ENCODE measurements at regions of chr4 and their contacts with region 1.

Region 1: DNA sequence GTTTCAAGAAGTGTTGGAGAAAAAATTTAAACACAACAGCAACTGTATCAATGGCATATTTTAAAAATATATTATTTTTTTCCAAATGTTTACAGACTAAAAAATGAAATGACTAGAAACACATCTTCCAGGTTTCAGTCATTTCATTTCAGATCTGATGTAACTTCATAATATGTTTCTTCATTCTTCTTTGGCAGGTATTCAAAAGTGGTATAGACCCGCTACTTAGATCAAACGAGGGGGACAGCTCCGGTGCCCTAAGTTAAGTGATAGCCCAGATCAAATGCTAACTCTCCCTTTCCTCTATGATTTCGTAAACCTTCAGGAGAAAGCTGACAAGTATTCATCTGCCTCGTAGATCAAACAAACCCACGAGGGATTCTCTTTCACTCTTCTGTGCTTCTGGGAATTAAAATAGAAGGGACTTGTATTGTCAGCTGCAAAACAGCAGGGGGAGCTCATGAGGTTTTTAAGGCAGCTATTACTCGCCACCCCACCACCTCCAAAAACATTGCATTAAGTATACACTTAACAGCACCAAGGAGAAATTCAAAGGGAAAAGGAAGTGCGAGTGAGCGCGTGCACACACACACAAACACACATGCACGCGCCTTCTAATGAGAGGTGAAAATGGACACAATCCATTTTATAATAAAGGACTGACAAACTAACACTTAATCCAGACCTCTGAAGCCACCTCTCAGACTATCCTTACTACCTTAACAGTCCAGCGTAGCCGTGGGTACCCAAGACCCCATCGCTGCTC is 21.4 kb downstream of the HELT start:
- DNase-seq: peak in 1 of 2 experiments; percentile 70
- H3K4me3 ChIP-seq: no peak overlapping the region
- H3K27ac ChIP-seq: no peak overlapping the region
- H3K4me1 ChIP-seq: no peaks in the 10 kb centered on the region; a peak in 1 of 7 replicates
- H3K27me3 ChIP-seq: peaks cover 0 to 2% (median 0%) of the 10 kb centered on the region in 4 experiments; a peak in 2 of 7 replicates
- CTCF ChIP-seq: peak in 2 of 3 experiments; percentile 72 to 83; a peak in 3 of 4 replicates
- EP300 ChIP-seq: no peak
- POLR2A ChIP-seq: no peak
- RAD21 ChIP-seq: peak; percentile 85

Region 2: GRCh38 chr4:185020293-185020808 is 19.3 kb before region 1 on chr4:
- CTCF ChIA-PET with region 1: interaction called, 68 read pairs
- POLR2A ChIA-PET with region 1: no interaction called
- DNase-seq: peak in 1 of 2 experiments; percentile 83
- H3K4me3 ChIP-seq: peak overlapping the region; percentile 2 to 53 (median 28); a peak in 7 of 8 replicates
- H3K27ac ChIP-seq: no peak overlapping the region
- H3K4me1 ChIP-seq: peaks cover 0 to 52% (median 29%) of the 10 kb centered on the region in 4 experiments; a peak in 6 of 7 replicates
- H3K27me3 ChIP-seq: peaks cover 95 to 100% (median 100%) of the 10 kb centered on the region in 4 experiments
- CTCF ChIP-seq: no peak
- EP300 ChIP-seq: no peak
- POLR2A ChIP-seq: no peak
- RAD21 ChIP-seq: no peak

Region 3: DNA sequence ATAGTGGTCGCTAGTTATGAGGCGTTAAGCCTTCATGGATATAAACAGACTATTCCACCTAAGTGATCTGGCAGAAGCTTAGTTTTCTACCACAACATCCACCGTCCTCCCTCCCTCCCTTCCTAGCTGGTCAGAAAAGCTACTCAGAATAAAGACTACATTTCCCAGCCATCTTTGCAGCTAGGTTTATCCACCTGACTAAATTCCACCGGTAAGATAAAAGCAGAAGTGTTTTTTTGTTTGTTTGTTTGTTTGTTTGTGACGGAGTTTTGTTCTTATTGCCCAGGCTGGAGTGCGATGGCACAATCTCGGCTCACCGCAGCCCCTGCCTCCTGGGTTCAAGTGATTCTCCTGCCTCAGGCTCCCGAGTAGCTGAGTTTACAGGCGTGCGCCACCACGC is 22.9 kb after region 1 on chr4:
- CTCF ChIA-PET with region 1: interaction called, 11 read pairs
- POLR2A ChIA-PET with region 1: no interaction called
- DNase-seq: no peak
- H3K4me3 ChIP-seq: no peak overlapping the region
- H3K27ac ChIP-seq: no peak overlapping the region
- H3K4me1 ChIP-seq: peaks cover 0 to 6% (median 0%) of the 10 kb centered on the region in 4 experiments; a peak in 1 of 7 replicates
- H3K27me3 ChIP-seq: no peaks in the 10 kb centered on the region
- CTCF ChIP-seq: no peak
- EP300 ChIP-seq: no peak
- POLR2A ChIP-seq: no peak
- RAD21 ChIP-seq: no peak

Region 4: GRCh38 chr4:185096032-185096653 is 56.5 kb after region 1 on chr4:
- CTCF ChIA-PET with region 1: interaction called, 210 read pairs
- POLR2A ChIA-PET with region 1: no interaction called
- DNase-seq: no peak
- H3K4me3 ChIP-seq: no peak overlapping the region
- H3K27ac ChIP-seq: no peak overlapping the region
- H3K4me1 ChIP-seq: peaks cover 0 to 4% (median 0%) of the 10 kb centered on the region in 4 experiments; a peak in 1 of 7 replicates
- H3K27me3 ChIP-seq: no peaks in the 10 kb centered on the region
- CTCF ChIP-seq: peak in 2 of 3 experiments; percentile 50 to 56; a peak in 2 of 4 replicates
- EP300 ChIP-seq: no peak
- POLR2A ChIP-seq: no peak
- RAD21 ChIP-seq: peak; percentile 80 to 82

Region 5: DNA sequence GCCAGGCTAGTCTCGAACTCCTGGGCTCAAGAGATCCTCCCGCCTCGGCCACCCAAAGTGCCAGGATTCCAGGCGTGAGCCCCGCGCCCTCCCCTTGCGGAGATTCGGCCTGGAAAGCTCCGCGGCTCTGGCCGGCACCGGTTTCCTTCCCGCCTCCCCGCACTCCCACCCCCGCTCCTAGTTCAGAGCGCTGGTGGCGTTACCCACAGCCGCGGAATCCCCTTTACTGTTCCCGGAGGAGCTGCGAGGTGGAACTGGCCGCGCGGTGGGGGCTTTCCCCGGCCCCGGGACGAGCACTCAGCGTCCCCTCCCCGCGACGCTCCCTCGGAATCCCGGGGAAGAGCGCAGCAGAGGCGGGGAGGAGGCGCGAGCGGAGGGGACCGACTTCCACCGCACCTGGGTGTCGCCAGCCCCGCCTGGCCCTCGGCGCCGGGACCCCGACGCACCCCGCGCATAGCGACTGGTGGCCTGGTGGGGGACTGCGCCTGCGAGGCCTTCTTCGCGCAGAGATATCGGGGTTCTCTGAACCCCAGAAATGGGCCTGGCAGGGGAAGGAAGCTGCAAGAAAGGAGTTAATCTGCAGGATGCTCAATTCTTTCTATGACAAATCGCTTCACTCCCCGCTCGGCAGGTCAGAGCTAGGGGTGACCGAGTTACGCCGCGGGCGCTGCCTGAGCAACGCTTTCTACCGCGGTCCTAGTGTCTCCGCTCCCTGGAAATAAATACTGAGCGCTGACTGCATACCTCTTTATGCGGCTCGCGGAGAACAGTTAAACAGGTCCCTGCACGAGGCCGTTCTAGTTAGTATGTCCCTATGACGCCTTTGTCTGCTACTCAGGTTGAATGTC is 88.8 kb after region 1 on chr4:
- CTCF ChIA-PET with region 1: interaction called, 167 read pairs
- POLR2A ChIA-PET with region 1: no interaction called
- DNase-seq: peak in 1 of 2 experiments; percentile 73
- H3K4me3 ChIP-seq: peak overlapping the region; percentile 47 to 70 (median 60)
- H3K27ac ChIP-seq: no peak overlapping the region
- H3K4me1 ChIP-seq: peaks cover 4 to 8% (median 6%) of the 10 kb centered on the region in 4 experiments; a peak in 6 of 7 replicates
- H3K27me3 ChIP-seq: peaks cover 1 to 22% (median 17%) of the 10 kb centered on the region in 4 experiments
- CTCF ChIP-seq: peak in 1 of 3 experiments; percentile 26; a peak in 1 of 4 replicates
- EP300 ChIP-seq: no peak
- POLR2A ChIP-seq: no peak; a peak in 1 of 3 replicates
- RAD21 ChIP-seq: no peak

Region 6: DNA sequence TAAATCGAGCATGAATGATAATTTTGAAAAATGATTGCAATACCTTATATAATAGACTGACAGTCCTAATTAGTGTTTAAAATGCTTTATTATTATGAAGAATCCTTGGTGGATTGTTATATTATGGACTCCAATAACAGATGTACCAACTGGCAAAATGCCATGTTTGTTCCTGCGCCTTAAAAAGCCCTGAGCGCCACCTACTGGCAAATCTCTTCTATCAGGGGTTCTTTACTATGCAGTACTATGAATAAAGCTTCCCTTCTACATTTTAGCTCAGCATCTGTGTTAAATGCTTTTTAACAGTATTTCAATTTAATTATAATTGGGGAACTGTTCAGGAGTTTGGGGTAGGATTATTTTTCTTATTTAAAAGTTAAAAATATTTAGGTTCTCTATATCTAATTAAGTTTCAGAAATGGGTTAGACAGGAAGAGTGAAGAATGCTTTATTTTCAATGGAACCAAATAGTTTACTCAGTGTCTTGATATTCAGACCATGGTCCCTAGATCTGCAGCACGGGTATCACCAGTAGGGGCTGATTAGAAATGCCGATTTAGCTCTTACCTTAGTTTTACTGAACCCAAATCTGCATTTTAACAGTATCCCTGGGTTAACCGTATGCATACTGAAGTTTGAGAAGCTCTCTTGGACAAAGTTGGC is 144.1 kb after region 1 on chr4:
- CTCF ChIA-PET with region 1: interaction called, 33 read pairs
- POLR2A ChIA-PET with region 1: no interaction called
- DNase-seq: peak in 1 of 2 experiments; percentile 70
- H3K4me3 ChIP-seq: no peak overlapping the region
- H3K27ac ChIP-seq: no peak overlapping the region
- H3K4me1 ChIP-seq: peaks cover 4 to 10% (median 6%) of the 10 kb centered on the region in 4 experiments; a peak in 5 of 7 replicates
- H3K27me3 ChIP-seq: no peaks in the 10 kb centered on the region
- CTCF ChIP-seq: peak in 2 of 3 experiments; percentile 58 to 67; a peak in 3 of 4 replicates
- EP300 ChIP-seq: no peak
- POLR2A ChIP-seq: no peak
- RAD21 ChIP-seq: peak; percentile 73 to 78

Measured in H1 (cell line).